Heart right ventricle (tissue), 16 donors: ENCODE measurements at regions of chr17 and their contacts with region 1.

Region 1: DNA sequence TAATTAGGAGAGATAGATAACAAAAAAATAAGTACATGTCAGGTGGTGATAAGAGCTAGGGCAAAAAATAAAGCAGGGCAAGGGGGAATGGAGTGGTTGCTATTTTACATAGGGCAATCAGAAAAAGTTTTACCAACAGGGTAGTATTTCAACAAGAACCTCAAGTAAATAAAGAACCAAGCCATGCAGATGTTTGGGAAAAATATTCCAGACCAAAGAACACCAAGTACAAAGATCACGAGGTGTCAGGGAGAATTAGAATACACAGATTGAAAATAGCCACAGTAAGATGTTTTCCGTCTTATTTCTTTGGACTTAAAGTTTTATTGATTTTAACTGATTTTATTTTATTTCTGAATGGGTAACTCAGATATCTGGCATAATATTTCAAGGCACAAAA is 11.1 kb downstream of the SYNRG start:
- DNase-seq: no peak
- ATAC-seq: peak in 1 of 8 donors; percentile 22
- H3K4me3 ChIP-seq: no peak overlapping the region
- H3K27ac ChIP-seq: no peak overlapping the region
- H3K4me1 ChIP-seq: peaks cover 0 to 12% (median 8%) of the 10 kb centered on the region in 9 donors
- H3K27me3 ChIP-seq: no peaks in the 10 kb centered on the region
- CTCF ChIP-seq: no peak

Region 2: DNA sequence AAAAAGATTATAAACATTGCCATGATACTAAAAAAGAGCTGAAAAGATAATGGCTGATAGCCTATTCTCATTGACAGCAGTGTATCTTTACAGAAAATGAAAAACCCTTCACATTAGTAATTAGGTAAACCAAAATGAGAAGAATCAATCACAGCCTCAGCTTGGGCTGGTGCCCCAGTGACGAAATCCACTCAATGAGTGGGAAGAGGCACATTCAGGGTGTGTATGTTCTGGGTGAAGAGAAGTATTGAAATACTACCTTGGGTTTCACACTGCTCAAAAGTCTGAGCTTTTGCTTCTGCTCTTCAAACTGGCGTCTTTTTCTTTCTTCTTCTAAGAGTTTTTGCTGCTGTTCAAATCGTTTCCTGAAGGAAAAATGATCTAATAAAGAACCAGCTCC is 13.1 kb before region 1 on chr17:
- intact Hi-C with region 1: loop called in 1 of 10 experiments (anchors 2 kb)
- DNase-seq: no peak
- ATAC-seq: no peak
- H3K4me3 ChIP-seq: no peak overlapping the region
- H3K27ac ChIP-seq: no peak overlapping the region
- H3K4me1 ChIP-seq: no peaks in the 10 kb centered on the region
- H3K27me3 ChIP-seq: no peaks in the 10 kb centered on the region
- CTCF ChIP-seq: no peak

Region 3: GRCh38 chr17:37761059-37761458 is 162.9 kb after region 1 on chr17:
- intact Hi-C with region 1: no loop called
- DNase-seq: no peak
- ATAC-seq: no peak
- H3K4me3 ChIP-seq: no peak overlapping the region
- H3K27ac ChIP-seq: no peak overlapping the region
- H3K4me1 ChIP-seq: peaks cover 0 to 7% (median 0%) of the 10 kb centered on the region in 9 donors
- H3K27me3 ChIP-seq: peaks cover 0 to 90% (median 45%) of the 10 kb centered on the region in 7 donors
- CTCF ChIP-seq: no peak